ENCODE measurements at regions of chr15 and their contacts with region 1.

Region 1: GRCh38 chr15:98943601-98944151 is 63.9 kb downstream of the PGPEP1L start:
- DNase-seq: no peak
- ATAC-seq: peak; percentile 5
- H3K4me3 ChIP-seq: no peak overlapping the region
- H3K27ac ChIP-seq: peak overlapping the region in 1 of 2 donors; percentile 56
- H3K4me1 ChIP-seq: no peaks in the 10 kb centered on the region
- H3K27me3 ChIP-seq: no peaks in the 10 kb centered on the region

Region 2: DNA sequence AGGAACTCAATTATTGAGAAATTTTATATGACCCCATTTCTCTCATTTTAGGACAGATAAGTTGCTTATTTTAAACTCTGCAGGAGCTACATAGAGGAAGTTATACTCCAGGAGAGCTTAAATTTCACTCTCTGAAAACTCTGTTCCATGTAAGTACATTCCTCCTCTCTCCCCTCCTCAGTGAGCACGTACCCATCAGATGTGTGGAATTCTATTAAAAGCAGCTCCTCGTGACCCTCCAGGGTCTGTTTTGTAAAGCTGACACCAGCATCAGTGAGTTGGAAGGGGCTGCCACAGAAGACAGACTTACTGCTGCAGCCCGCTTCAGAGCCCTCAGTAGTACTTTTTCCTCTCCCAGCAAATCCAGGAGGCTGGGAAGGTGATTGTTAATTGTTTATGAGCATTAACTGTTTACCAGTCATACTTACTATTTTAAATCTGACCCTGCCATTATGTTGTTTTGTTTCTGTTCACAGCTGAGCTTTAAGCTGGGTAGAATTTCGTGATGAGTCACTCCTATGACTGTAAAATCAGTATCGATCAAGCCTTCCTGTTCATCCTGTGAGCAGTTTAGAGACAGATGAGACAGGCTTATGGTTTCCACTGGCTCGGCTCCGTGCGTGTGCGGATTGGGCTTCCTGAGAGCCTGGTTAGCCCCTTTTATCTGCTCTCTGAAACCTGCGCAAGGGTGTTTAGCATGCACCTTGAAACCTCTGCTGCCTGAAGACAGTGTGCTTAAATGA is 274.9 kb before region 1 on chr15:
- intact Hi-C with region 1: loop called in 1 of 2 experiments (anchors 10 kb)
- DNase-seq: no peak
- ATAC-seq: peak; percentile 6
- H3K4me3 ChIP-seq: no peak overlapping the region
- H3K27ac ChIP-seq: peak overlapping the region in 1 of 2 donors; percentile 56
- H3K4me1 ChIP-seq: peaks cover 9 to 29% of the 10 kb centered on the region in 2 donors
- H3K27me3 ChIP-seq: no peaks in the 10 kb centered on the region

Region 3: DNA sequence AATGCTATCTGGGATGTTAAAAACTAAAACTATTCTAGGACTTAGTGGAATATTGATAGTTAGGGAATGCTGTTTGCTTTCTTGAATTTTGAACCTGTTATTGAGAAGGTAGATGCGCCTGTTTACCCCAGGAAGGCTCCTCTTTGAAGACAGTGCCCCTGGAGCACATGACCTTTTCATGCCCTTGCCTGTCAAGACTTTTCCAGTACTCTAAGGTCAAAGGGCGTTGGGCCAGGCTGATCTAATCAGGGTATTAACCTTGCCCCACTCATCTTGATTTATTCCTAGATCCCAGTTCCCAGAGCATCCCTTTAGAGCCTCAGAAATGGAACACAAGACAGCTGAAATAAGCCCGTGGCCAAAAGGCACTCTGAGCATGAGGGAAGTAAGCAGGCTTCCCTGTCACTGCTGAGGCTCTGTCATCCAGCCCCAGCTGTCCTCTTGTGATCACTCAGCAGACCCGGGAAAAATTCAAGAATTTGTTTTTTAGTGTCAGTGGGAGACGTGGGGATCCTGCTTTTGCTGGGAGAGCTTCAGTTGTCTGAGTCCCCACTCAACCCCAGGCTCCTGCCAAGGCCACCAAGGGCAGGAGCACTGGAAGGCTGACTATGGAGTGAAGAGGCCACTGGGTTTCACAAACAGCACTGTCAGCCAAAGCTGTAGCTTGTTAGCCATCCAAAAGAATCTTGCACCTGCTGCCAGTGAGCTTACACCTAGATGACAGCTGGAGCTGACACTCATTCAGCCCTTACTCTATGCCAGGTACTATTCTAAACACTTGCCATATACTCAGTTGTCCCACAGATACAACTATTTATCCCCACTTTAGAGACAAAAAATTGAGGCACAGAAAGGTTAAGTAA is 105.0 kb before region 1 on chr15:
- intact Hi-C with region 1: no loop called
- DNase-seq: no peak
- ATAC-seq: no peak
- H3K4me3 ChIP-seq: no peak overlapping the region
- H3K27ac ChIP-seq: no peak overlapping the region
- H3K4me1 ChIP-seq: peaks cover 2 to 8% of the 10 kb centered on the region in 2 donors
- H3K27me3 ChIP-seq: no peaks in the 10 kb centered on the region

Region 4: GRCh38 chr15:98906712-98907083 is 37.0 kb before region 1 on chr15:
- intact Hi-C with region 1: loop called in 1 of 2 experiments (anchors 5 kb)
- DNase-seq: peak in 1 of 2 donors; percentile 61
- ATAC-seq: peak; percentile 34
- H3K4me3 ChIP-seq: no peak overlapping the region
- H3K27ac ChIP-seq: peak overlapping the region; percentile 53 to 94
- H3K4me1 ChIP-seq: peaks cover 6 to 7% of the 10 kb centered on the region in 2 donors
- H3K27me3 ChIP-seq: no peaks in the 10 kb centered on the region

Region 5: GRCh38 chr15:98983333-98983732 is 39.7 kb after region 1 on chr15:
- intact Hi-C with region 1: loop called in 1 of 2 experiments (anchors 5 kb)
- DNase-seq: peak in 1 of 2 donors; percentile 64
- ATAC-seq: peak; percentile 82
- H3K4me3 ChIP-seq: no peak overlapping the region
- H3K27ac ChIP-seq: peak overlapping the region in 1 of 2 donors; percentile 37
- H3K4me1 ChIP-seq: no peaks in the 10 kb centered on the region
- H3K27me3 ChIP-seq: no peaks in the 10 kb centered on the region

Region 6: GRCh38 chr15:99014803-99015676 is 71.4 kb after region 1 on chr15:
- intact Hi-C with region 1: loop called in 1 of 2 experiments (anchors 2 kb)
- DNase-seq: peak; percentile 75 to 88
- ATAC-seq: peak; percentile 86
- H3K4me3 ChIP-seq: peak overlapping the region; percentile 42
- H3K27ac ChIP-seq: no peak overlapping the region
- H3K4me1 ChIP-seq: no peaks in the 10 kb centered on the region
- H3K27me3 ChIP-seq: no peaks in the 10 kb centered on the region

Region 7: DNA sequence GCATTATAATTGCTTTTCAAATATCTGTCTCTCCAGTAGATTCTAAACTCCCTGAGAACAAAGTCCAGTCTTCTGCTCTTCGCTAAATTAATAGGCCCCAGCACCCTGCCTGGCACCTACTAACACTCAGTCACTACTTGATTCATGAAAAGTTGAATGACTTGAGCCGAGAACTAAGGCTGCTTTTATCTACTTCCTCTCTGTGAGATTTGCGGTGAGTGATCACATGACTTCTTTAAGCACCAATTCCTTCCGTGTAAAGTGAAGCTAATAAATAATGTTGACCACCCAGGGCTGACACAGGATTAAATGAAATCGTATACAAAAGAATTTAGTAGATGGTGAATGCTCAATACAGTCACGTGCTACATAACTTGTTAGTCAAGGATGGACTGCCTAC is 108.5 kb after region 1 on chr15:
- intact Hi-C with region 1: no loop called
- DNase-seq: no peak
- ATAC-seq: no peak
- H3K4me3 ChIP-seq: no peak overlapping the region
- H3K27ac ChIP-seq: no peak overlapping the region
- H3K4me1 ChIP-seq: no peaks in the 10 kb centered on the region
- H3K27me3 ChIP-seq: no peaks in the 10 kb centered on the region

Region 8: GRCh38 chr15:99197856-99198255 is 254.2 kb after region 1 on chr15:
- intact Hi-C with region 1: no loop called
- DNase-seq: no peak
- ATAC-seq: no peak
- H3K4me3 ChIP-seq: no peak overlapping the region
- H3K27ac ChIP-seq: no peak overlapping the region
- H3K4me1 ChIP-seq: no peaks in the 10 kb centered on the region
- H3K27me3 ChIP-seq: no peaks in the 10 kb centered on the region

Measured in aorta (tissue), 5 donors.